WTC11 (cell line): ENCODE measurements at regions of chr2 and their contacts with region 1.

Region 1: GRCh38 chr2:170409164-170409535 is 231.2 kb downstream of the MYO3B start:
- DNase-seq: peak; percentile 80
- ATAC-seq: peak; percentile 73
- H3K4me3 Mint-ChIP-seq: peak overlapping the region; percentile 40; the same call in 1 of the 2 replicates
- H3K27ac Mint-ChIP-seq: no peak overlapping the region
- H3K4me1 Mint-ChIP-seq: peaks cover 18% of the 10 kb centered on the region
- H3K27me3 Mint-ChIP-seq: no peaks in the 10 kb centered on the region; the same call in 1 of the 2 replicates
- CTCF ChIP-seq: peak; percentile 95

Region 2: DNA sequence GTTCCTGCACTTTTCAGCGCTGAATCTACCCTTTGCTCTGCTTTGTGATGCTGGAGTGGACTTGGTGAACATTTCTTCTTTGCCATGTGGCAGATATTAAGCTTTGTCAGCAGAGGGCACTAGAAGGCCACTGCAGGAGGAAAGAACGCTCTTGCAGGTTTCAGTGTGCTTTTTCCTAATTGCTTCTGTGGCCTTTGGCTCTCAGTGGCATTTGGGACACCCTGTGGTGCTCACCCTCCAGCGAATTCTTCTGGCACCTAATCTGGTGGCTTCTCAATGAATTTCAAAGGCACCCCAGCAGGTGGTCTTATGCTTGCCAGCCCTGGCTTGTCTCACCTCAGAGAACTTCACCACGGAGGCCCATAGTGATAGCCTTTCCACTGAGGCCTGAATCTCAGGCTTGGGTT is 84.5 kb before region 1 on chr2:
- CTCF ChIA-PET with region 1: interaction called, 13 read pairs
- POLR2A ChIA-PET with region 1: no interaction called
- DNase-seq: peak; percentile 74
- ATAC-seq: peak; percentile 89
- H3K4me3 Mint-ChIP-seq: no peak overlapping the region
- H3K27ac Mint-ChIP-seq: no peak overlapping the region
- H3K4me1 Mint-ChIP-seq: peaks cover 15% of the 10 kb centered on the region
- H3K27me3 Mint-ChIP-seq: no peaks in the 10 kb centered on the region; the same call in 1 of the 2 replicates
- CTCF ChIP-seq: peak; percentile 61

Region 3: GRCh38 chr2:170394641-170395387 is 14.3 kb before region 1 on chr2:
- CTCF ChIA-PET with region 1: interaction called, 15 read pairs
- POLR2A ChIA-PET with region 1: no interaction called
- DNase-seq: no peak
- ATAC-seq: no peak
- H3K4me3 Mint-ChIP-seq: no peak overlapping the region
- H3K27ac Mint-ChIP-seq: no peak overlapping the region
- H3K4me1 Mint-ChIP-seq: peaks cover 11% of the 10 kb centered on the region; the same call in 1 of the 2 replicates
- H3K27me3 Mint-ChIP-seq: no peaks in the 10 kb centered on the region; the same call in 1 of the 2 replicates
- CTCF ChIP-seq: no peak

Region 4: GRCh38 chr2:170434900-170435621 is 25.9 kb after region 1 on chr2:
- CTCF ChIA-PET with region 1: interaction called, 20 read pairs
- POLR2A ChIA-PET with region 1: interaction called, 3 read pairs
- DNase-seq: no peak
- ATAC-seq: no peak
- H3K4me3 Mint-ChIP-seq: no peak overlapping the region
- H3K27ac Mint-ChIP-seq: peak overlapping the region; percentile 52; the same call in 1 of the 2 replicates
- H3K4me1 Mint-ChIP-seq: peaks cover 41% of the 10 kb centered on the region
- H3K27me3 Mint-ChIP-seq: peaks cover 61% of the 10 kb centered on the region
- CTCF ChIP-seq: no peak